GM12878 (cell line): ENCODE measurements at regions of chrX and their contacts with region 1.

Region 1: DNA sequence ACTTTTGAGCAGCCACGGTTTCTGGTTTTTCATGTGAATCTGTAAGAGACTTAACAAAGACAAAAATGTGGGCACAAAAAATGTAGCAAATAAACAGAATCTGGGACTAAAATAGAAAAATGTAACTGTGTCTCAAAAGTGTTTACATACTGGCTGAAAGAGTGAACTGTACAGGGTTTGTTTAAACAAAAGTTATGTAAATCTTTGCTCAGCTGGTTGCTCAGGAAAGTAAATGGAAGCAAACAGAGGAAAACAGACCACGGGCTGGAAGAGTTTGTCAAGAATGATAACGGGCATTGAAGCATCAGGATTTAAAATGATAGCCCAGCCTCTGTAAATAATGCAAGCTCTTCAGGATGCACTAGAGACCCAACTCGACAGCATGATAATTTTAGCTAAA is 921.8 kb upstream of the FTHL17 start:
- DNase-seq: no peak
- ATAC-seq: no peak
- H3K4me3 ChIP-seq: no peak overlapping the region
- H3K27ac ChIP-seq: no peak overlapping the region
- H3K4me1 ChIP-seq: no peaks in the 10 kb centered on the region
- H3K27me3 ChIP-seq: no peaks in the 10 kb centered on the region
- CTCF ChIP-seq: no peak
- EP300 ChIP-seq: no peak
- POLR2A ChIP-seq: no peak
- RAD21 ChIP-seq: no peak

Region 2: DNA sequence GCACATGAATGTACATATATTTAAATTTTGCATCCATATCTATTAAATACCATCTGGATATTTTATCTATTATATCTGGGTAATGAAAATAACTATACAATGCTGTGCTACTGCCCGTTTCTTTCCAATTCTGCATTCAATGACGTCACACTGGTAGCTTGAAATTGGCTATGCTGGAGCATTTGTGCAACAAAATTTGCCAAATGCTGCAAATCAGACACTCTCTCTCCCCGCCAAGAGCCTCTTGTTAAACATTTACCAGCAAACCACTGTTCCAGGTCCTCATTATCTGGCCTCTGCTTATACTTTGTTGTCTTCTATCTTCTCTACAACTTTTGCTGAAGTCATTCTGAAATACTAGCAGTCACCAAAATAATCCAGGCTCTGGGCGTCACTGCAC is 16.6 kb after region 1 on chrX:
- CTCF ChIA-PET with region 1: no interaction called
- POLR2A ChIA-PET with region 1: interaction called, 3 read pairs
- RAD21 ChIA-PET with region 1: no interaction called
- SMC1A ChIA-PET with region 1: interaction called, 3 read pairs
- in situ Hi-C with region 1: no loop called
- intact Hi-C with region 1: loop called (anchors 1 kb)
- DNase-seq: no peak
- ATAC-seq: no peak
- H3K4me3 ChIP-seq: no peak overlapping the region
- H3K27ac ChIP-seq: no peak overlapping the region
- H3K4me1 ChIP-seq: no peaks in the 10 kb centered on the region
- H3K27me3 ChIP-seq: no peaks in the 10 kb centered on the region; a peak in 1 of 4 replicates
- CTCF ChIP-seq: no peak
- EP300 ChIP-seq: no peak
- POLR2A ChIP-seq: no peak
- RAD21 ChIP-seq: no peak